ENCODE measurements at regions of chr4 and their contacts with region 1.

Region 1: GRCh38 chr4:42690537-42690936 is 33.6 kb upstream of the ATP8A1 start:
- DNase-seq: no peak
- ATAC-seq: no peak
- H3K4me3 ChIP-seq: no peak overlapping the region
- H3K27ac ChIP-seq: no peak overlapping the region
- H3K4me1 ChIP-seq: no peaks in the 10 kb centered on the region
- H3K27me3 ChIP-seq: no peaks in the 10 kb centered on the region
- CTCF ChIP-seq: no peak

Region 2: GRCh38 chr4:42656944-42657792 is 33.4 kb before region 1 on chr4 and contains the start of gene ATP8A1:
- CTCF ChIA-PET with region 1: no interaction called
- POLR2A ChIA-PET with region 1: no interaction called
- in situ Hi-C with region 1: no loop called
- intact Hi-C with region 1: loop called (anchors 1 kb)
- DNase-seq: peak; percentile 42
- ATAC-seq: peak; percentile 96
- H3K4me3 ChIP-seq: peak within 1 kb of the TSS; percentile 57 to 72
- H3K27ac ChIP-seq: peak within 1 kb of the TSS; percentile 86
- H3K4me1 ChIP-seq: no peaks in the 10 kb centered on the region; the same call in 1 of the 2 replicates
- H3K27me3 ChIP-seq: no peaks in the 10 kb centered on the region
- CTCF ChIP-seq: no peak
- total RNA-seq, gene ATP8A1: 0.80 TPM

Measured in Panc1 (cell line).